ENCODE measurements at regions of chr14 and their contacts with region 1.

Region 1: DNA sequence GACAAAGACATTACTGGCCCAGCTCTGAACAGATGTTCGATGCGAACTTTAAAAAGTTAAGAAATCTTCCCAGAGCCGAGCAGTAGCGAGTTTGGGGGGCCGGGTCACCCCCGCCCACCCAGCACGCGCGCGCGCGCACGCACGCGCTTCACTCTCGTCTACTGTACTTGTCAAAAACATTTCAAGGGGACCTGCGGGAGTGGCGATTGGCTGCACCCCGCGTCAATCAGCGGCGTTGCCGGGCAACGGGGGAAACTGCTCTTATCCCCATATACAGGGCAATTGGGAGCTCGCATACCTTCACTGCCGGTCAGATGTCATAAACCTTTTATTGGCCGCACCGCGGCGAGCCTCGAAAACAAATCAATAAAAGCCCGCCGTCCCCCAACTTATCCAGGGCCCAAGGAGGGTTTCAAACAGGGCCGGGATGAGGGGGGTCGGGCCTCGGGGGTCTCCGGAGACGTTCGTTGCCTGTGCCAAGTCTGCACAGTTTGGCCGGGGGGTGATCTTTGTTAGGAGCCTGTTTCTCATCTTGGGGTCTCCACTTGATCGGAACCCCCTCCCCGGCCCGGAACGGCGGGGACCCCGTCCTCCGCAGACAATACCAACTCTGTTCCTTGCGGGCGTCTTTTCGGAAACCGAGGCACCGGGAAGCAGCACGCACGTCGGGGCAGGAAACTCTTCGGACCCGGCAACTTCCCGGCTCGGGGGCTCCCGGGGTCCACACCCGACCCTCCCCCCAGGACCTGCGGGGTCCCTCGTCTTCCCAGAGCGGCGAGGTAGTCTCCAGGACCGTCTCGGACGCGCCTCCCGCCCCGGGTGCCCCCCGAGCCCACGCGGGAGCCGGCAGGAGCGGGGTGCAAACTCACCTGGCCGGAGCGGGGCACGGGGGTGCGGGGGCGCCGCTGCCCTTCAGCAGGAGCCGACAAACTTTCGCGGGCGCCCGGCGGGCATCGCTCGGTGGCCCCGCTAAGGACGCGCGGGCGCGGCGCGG is 734 bp downstream of the FOXN3 start:
- DNase-seq: peak; percentile 96 to 99 (median 97)
- H3K4me3 ChIP-seq: peak overlapping the region; percentile 86
- H3K4me3 Mint-ChIP-seq: peak overlapping the region; percentile 88 to 98 (median 94)
- H3K27ac ChIP-seq: peak overlapping the region; percentile 65
- H3K27ac Mint-ChIP-seq: peak overlapping the region; percentile 93 to 99 (median 95)
- H3K4me1 ChIP-seq: peaks cover 22% of the 10 kb centered on the region
- H3K4me1 Mint-ChIP-seq: peaks cover 22 to 60% (median 41%) of the 10 kb centered on the region in 4 donors
- H3K27me3 ChIP-seq: no peaks in the 10 kb centered on the region
- H3K27me3 Mint-ChIP-seq: no peaks in the 10 kb centered on the region

Region 2: DNA sequence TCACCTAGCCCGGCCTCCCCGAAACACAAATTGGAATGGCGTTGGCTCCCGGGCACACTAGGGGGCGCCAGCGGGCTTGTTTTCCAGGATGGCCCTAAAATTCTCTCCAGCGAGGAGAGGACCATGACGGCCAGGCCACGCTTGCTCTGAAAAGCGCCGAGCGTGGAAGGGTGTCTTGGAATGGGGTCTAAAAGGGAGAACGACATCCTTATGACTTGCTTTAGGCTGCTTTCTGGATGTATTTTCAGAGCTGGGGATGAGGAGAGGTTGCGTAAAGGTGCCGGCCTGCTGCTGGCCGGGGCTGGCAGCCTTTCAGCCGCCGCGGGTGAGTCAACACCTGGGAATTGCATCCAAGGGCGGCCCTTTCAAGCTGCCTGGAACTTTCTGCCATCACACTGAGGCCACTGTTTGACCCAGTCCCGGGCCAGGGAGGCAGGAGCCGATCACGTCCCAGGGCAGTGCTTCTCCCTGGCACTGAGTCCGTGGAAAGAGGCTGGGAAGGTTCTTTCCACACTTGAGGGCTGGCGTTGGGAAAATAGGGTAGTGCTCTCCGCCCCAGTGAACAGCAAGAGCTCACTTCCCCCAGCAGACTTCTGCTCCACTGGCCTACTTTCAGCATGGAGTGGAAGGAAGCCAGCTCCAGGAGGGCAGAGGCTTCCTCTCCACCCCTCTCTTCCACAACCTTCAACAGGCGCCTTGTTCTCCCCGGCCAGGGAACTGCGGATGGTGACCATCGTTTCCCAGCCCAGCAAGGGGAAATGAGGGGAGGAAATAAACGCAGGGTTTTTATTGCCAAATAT is 375.6 kb before region 1 on chr14:
- CTCF ChIA-PET with region 1: no interaction called
- POLR2A ChIA-PET with region 1: no interaction called
- intact Hi-C with region 1: loop called (anchors 1 kb)
- DNase-seq: peak; percentile 67 to 74 (median 68)
- H3K4me3 ChIP-seq: no peak overlapping the region
- H3K4me3 Mint-ChIP-seq: peak overlapping the region; percentile 53 to 85 (median 78)
- H3K27ac ChIP-seq: no peak overlapping the region
- H3K27ac Mint-ChIP-seq: no peak overlapping the region
- H3K4me1 ChIP-seq: peaks cover 11% of the 10 kb centered on the region
- H3K4me1 Mint-ChIP-seq: peaks cover 4 to 9% (median 7%) of the 10 kb centered on the region in 4 donors
- H3K27me3 ChIP-seq: peaks cover 5% of the 10 kb centered on the region
- H3K27me3 Mint-ChIP-seq: peaks cover 12 to 14% of the 10 kb centered on the region in 2 donors

Region 3: GRCh38 chr14:89336338-89336737 is 80.0 kb before region 1 on chr14:
- CTCF ChIA-PET with region 1: interaction called, 4 read pairs
- POLR2A ChIA-PET with region 1: no interaction called
- intact Hi-C with region 1: loop called (anchors 1 kb)
- DNase-seq: no peak
- H3K4me3 ChIP-seq: no peak overlapping the region
- H3K4me3 Mint-ChIP-seq: no peak overlapping the region
- H3K27ac ChIP-seq: no peak overlapping the region
- H3K27ac Mint-ChIP-seq: peak overlapping the region in 2 of 7 donors; percentile 36 to 67
- H3K4me1 ChIP-seq: no peaks in the 10 kb centered on the region
- H3K4me1 Mint-ChIP-seq: peaks cover 15 to 43% (median 22%) of the 10 kb centered on the region in 4 donors
- H3K27me3 ChIP-seq: no peaks in the 10 kb centered on the region
- H3K27me3 Mint-ChIP-seq: no peaks in the 10 kb centered on the region

Region 4: DNA sequence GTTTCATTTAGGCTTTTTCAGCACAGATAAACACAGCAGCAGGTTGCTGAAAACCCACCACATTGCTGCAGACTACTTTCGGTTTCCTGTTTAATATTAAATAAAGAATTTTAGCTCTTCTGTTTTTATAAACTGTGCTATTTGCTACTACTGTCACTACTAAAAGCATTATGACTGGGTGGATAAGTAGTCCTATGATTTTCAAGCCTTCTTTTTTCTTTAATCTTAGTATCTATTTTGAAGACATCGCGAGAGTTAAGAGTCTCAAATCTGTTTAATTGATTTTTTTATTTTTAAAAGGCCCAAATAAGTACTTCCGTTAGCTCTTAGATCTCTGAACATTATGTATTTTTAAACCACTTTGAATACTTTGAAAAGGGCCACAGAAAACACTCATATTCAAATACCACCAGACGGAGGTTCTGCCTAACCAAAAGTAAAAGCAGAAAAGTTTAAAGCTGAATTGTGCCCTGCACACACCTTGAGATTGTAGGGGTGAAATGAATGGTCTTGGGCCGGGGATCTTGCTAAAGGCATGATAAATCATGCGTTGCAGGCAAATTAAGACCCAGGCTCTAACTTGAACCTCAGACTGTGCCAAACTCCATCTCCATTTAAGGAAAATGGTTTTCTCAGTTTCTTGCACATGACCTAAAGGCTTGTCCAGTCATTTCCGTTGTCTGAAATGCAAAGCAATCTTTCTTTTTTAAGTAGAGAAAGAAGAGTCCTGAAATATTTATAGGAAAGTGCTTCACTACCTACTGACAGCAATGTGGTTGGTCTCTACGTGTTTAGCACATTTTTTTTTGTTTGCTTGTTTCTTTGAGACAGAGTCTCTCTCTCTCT is 14.3 kb after region 1 on chr14:
- CTCF ChIA-PET with region 1: interaction called, 6 read pairs
- POLR2A ChIA-PET with region 1: interaction called, 5 read pairs
- intact Hi-C with region 1: loop called (anchors 1 kb)
- DNase-seq: peak; percentile 61 to 81 (median 78)
- H3K4me3 ChIP-seq: peak overlapping the region; percentile 1 to 30
- H3K4me3 Mint-ChIP-seq: peak overlapping the region; percentile 68 to 91 (median 87)
- H3K27ac ChIP-seq: peak overlapping the region; percentile 45
- H3K27ac Mint-ChIP-seq: peak overlapping the region; percentile 73 to 96 (median 89)
- H3K4me1 ChIP-seq: peaks cover 36% of the 10 kb centered on the region
- H3K4me1 Mint-ChIP-seq: peaks cover 33 to 67% (median 47%) of the 10 kb centered on the region in 4 donors
- H3K27me3 ChIP-seq: no peaks in the 10 kb centered on the region
- H3K27me3 Mint-ChIP-seq: no peaks in the 10 kb centered on the region

Region 5: DNA sequence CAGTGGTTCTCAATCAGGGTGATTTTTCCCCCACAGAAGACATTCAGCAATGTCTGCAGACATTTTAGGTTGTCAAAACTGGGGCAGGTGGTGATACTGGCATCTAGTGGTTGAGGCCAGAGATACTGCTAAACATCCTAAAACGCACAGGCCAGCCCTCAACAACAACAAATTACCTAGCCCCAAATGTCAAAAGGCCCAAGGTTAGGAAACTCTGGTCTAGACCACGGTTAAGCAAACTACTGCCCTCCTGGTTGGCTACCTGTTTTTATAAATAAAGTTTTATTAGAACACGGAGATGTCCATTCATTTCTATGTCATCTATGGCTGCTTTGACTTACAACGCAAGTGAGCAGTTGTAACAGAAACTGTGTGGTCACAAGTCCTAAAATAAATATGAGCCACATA is 351.6 kb after region 1 on chr14:
- CTCF ChIA-PET with region 1: interaction called, 3 read pairs
- POLR2A ChIA-PET with region 1: no interaction called
- intact Hi-C with region 1: loop called (anchors 1 kb)
- DNase-seq: peak; percentile 64 to 69 (median 67)
- H3K4me3 ChIP-seq: no peak overlapping the region
- H3K4me3 Mint-ChIP-seq: peak overlapping the region in 4 of 8 donors; percentile 51 to 62 (median 60)
- H3K27ac ChIP-seq: no peak overlapping the region
- H3K27ac Mint-ChIP-seq: peak overlapping the region in 2 of 7 donors; percentile 2 to 56
- H3K4me1 ChIP-seq: peaks cover 9% of the 10 kb centered on the region
- H3K4me1 Mint-ChIP-seq: peaks cover 13 to 32% (median 25%) of the 10 kb centered on the region in 4 donors
- H3K27me3 ChIP-seq: no peaks in the 10 kb centered on the region
- H3K27me3 Mint-ChIP-seq: peaks cover 0 to 2% of the 10 kb centered on the region in 2 donors

Region 6: GRCh38 chr14:89915114-89915878 is 499.0 kb after region 1 on chr14:
- CTCF ChIA-PET with region 1: no interaction called
- POLR2A ChIA-PET with region 1: no interaction called
- intact Hi-C with region 1: loop called (anchors 2 kb)
- DNase-seq: peak; percentile 53 to 69 (median 63)
- H3K4me3 ChIP-seq: no peak overlapping the region
- H3K4me3 Mint-ChIP-seq: no peak overlapping the region
- H3K27ac ChIP-seq: no peak overlapping the region
- H3K27ac Mint-ChIP-seq: peak overlapping the region in 1 of 7 donors; percentile 19
- H3K4me1 ChIP-seq: peaks cover 4% of the 10 kb centered on the region
- H3K4me1 Mint-ChIP-seq: peaks cover 0 to 4% (median 3%) of the 10 kb centered on the region in 4 donors
- H3K27me3 ChIP-seq: no peaks in the 10 kb centered on the region
- H3K27me3 Mint-ChIP-seq: peaks cover 4% of the 10 kb centered on the region in 2 donors

Region 7: GRCh38 chr14:90118027-90118426 is 701.7 kb after region 1 on chr14:
- CTCF ChIA-PET with region 1: no interaction called
- POLR2A ChIA-PET with region 1: no interaction called
- intact Hi-C with region 1: no loop called
- DNase-seq: no peak
- H3K4me3 ChIP-seq: no peak overlapping the region
- H3K4me3 Mint-ChIP-seq: no peak overlapping the region
- H3K27ac ChIP-seq: no peak overlapping the region
- H3K27ac Mint-ChIP-seq: no peak overlapping the region
- H3K4me1 ChIP-seq: no peaks in the 10 kb centered on the region
- H3K4me1 Mint-ChIP-seq: no peaks in the 10 kb centered on the region
- H3K27me3 ChIP-seq: no peaks in the 10 kb centered on the region
- H3K27me3 Mint-ChIP-seq: peaks cover 18% of the 10 kb centered on the region in 2 donors